Right cardiac atrium (tissue), 5 donors: ENCODE measurements at regions of chr20 and their contacts with region 1.

Region 1: GRCh38 chr20:17682103-17682888 is at the start of gene RRBP1:
- DNase-seq: peak; percentile 99 to 100 (median 99)
- ATAC-seq: peak; percentile 97
- H3K4me3 ChIP-seq: peak within 1 kb of the TSS; percentile 93
- H3K27ac ChIP-seq: peak within 1 kb of the TSS; percentile 97
- H3K4me1 ChIP-seq: peaks cover 6% of the 10 kb centered on the region
- H3K27me3 ChIP-seq: no peaks in the 10 kb centered on the region
- total RNA-seq, gene RRBP1: 49.8 to 120 (median 57.1) TPM

Region 2: GRCh38 chr20:17806739-17807441 is 124.6 kb after region 1 on chr20:
- intact Hi-C with region 1: loop called in 2 of 4 experiments (anchors 10 kb)
- DNase-seq: peak; percentile 88 to 94 (median 94)
- ATAC-seq: peak; percentile 95 to 96
- H3K4me3 ChIP-seq: no peak overlapping the region
- H3K27ac ChIP-seq: peak overlapping the region; percentile 74
- H3K4me1 ChIP-seq: peaks cover 14% of the 10 kb centered on the region
- H3K27me3 ChIP-seq: no peaks in the 10 kb centered on the region

Region 3: GRCh38 chr20:17898548-17898994 is 216.3 kb after region 1 on chr20:
- intact Hi-C with region 1: loop called in 2 of 4 experiments (anchors 1 to 2 kb)
- DNase-seq: peak; percentile 69 to 85 (median 72)
- ATAC-seq: peak; percentile 47 to 56
- H3K4me3 ChIP-seq: no peak overlapping the region
- H3K27ac ChIP-seq: no peak overlapping the region
- H3K4me1 ChIP-seq: peaks cover 3% of the 10 kb centered on the region
- H3K27me3 ChIP-seq: no peaks in the 10 kb centered on the region